ENCODE measurements at regions of chr1 and their contacts with region 1.

Region 1: GRCh38 chr1:48776393-48777218 is at the start of gene BEND5:
- DNase-seq: peak; percentile 77
- ATAC-seq: peak; percentile 72
- H3K4me3 Mint-ChIP-seq: peak within 1 kb of the TSS; percentile 85
- H3K27ac Mint-ChIP-seq: peak within 1 kb of the TSS; percentile 82
- H3K4me1 Mint-ChIP-seq: peaks cover 36% of the 10 kb centered on the region
- H3K27me3 Mint-ChIP-seq: peaks cover 7% of the 10 kb centered on the region
- total RNA-seq, gene BEND5: 25.9 to 34.7 TPM

Region 2: DNA sequence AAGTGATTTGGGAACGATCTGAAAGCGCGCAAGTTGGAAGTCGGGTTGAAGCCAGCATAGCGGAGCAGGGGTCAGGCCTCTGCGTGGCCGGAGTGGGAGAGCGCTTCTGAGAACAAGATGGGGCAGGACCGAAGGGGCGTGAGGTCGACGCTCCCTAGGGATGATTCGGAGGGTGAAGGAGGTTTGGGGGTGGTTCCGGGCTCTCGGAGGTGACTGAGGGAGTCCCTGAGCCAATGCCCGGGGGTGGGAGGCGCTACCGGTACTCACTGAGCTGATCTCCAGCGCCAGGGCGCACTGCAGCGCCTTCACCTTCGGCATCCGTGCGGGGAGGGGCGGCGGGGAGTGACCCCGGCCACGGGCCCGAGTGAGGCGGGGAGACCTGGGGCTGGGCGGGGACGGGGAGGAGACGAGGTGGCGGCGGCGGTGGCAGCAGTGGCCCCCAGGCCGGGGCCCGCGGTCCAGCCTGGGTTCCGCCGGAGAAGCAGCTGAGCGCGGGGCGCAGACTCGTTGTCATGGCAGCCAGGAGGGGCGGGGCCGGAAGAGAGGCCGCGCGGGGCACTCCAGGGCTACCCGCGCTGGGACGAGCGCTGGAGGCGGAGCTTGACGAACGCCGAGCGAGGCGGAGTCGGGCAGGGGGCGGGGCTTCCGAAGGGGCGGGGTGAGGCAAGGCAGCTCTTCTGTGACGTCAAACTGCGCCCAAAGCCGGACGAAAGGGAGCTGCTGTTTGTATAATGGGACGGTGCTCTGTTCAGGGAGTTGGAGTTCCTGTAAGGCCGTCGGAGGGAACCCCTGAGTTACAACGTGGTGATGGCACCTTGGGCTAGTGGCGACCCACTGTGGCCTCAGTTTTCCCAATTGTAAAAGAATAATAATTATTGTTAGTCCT is 304.7 kb before region 1 on chr1 and contains the start of gene SPATA6:
- CTCF ChIA-PET with region 1: no interaction called
- POLR2A ChIA-PET with region 1: no interaction called
- intact Hi-C with region 1: loop called in 1 of 2 experiments (anchors 5 kb)
- DNase-seq: peak; percentile 99
- ATAC-seq: peak; percentile 97
- H3K4me3 Mint-ChIP-seq: peak within 1 kb of the TSS; percentile 78
- H3K27ac Mint-ChIP-seq: peak within 1 kb of the TSS; percentile 49
- H3K4me1 Mint-ChIP-seq: peaks cover 25% of the 10 kb centered on the region
- H3K27me3 Mint-ChIP-seq: peaks cover 8% of the 10 kb centered on the region
- total RNA-seq, gene SPATA6: 2.8 to 3.3 TPM

Region 3: GRCh38 chr1:48841461-48841860 is 64.9 kb after region 1 on chr1:
- CTCF ChIA-PET with region 1: no interaction called
- POLR2A ChIA-PET with region 1: no interaction called
- intact Hi-C with region 1: no loop called
- DNase-seq: no peak
- ATAC-seq: no peak
- H3K4me3 Mint-ChIP-seq: no peak overlapping the region
- H3K27ac Mint-ChIP-seq: no peak overlapping the region
- H3K4me1 Mint-ChIP-seq: no peaks in the 10 kb centered on the region
- H3K27me3 Mint-ChIP-seq: peaks cover 11% of the 10 kb centered on the region

Region 4: GRCh38 chr1:48999321-48999720 is 222.7 kb after region 1 on chr1:
- CTCF ChIA-PET with region 1: no interaction called
- POLR2A ChIA-PET with region 1: no interaction called
- intact Hi-C with region 1: no loop called
- DNase-seq: no peak
- ATAC-seq: no peak
- H3K4me3 Mint-ChIP-seq: no peak overlapping the region
- H3K27ac Mint-ChIP-seq: no peak overlapping the region
- H3K4me1 Mint-ChIP-seq: no peaks in the 10 kb centered on the region
- H3K27me3 Mint-ChIP-seq: no peaks in the 10 kb centered on the region

Measured in activated CD4-positive, alpha-beta T cell treated with anti-CD3 and anti-CD28 coated beads for 36 hours (primary cell).